ENCODE measurements at regions of chr20 and their contacts with region 1.

Region 1: DNA sequence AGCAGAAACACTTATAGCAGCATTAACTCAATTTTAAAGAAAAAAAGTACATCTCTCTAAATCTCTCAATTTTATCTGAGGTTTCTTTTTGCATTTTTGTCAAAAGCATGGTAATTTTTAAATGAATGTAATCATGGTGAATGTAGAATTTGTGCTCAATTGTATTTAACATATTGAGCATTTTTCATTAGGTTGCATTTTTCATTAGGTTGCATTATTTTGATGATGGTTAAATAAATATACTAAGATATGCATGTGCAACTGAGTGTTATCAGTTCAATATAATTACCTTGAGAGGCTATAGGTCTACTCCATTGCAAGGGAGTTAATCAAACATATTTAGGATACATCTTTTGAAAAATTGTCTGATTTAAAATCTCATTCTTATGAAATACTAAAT is 355.1 kb upstream of the SPTLC3 start:
- DNase-seq: no peak
- ATAC-seq: no peak
- H3K4me3 ChIP-seq: no peak overlapping the region
- H3K27ac ChIP-seq: no peak overlapping the region
- H3K4me1 ChIP-seq: no peaks in the 10 kb centered on the region
- H3K27me3 ChIP-seq: peaks cover 0 to 4% (median 0%) of the 10 kb centered on the region in 7 donors
- CTCF ChIP-seq: no peak

Region 2: GRCh38 chr20:11686820-11687543 is 966.7 kb before region 1 on chr20:
- intact Hi-C with region 1: loop called in 1 of 10 experiments (anchors 5 kb)
- DNase-seq: peak in 1 of 2 donors; percentile 41
- ATAC-seq: peak in 5 of 8 donors; percentile 39 to 75 (median 44)
- H3K4me3 ChIP-seq: peak overlapping the region in 9 of 10 donors; percentile 21 to 54 (median 43)
- H3K27ac ChIP-seq: no peak overlapping the region
- H3K4me1 ChIP-seq: peaks cover 0 to 20% (median 5%) of the 10 kb centered on the region in 9 donors
- H3K27me3 ChIP-seq: peaks cover 0 to 18% (median 8%) of the 10 kb centered on the region in 7 donors
- CTCF ChIP-seq: no peak

Region 3: DNA sequence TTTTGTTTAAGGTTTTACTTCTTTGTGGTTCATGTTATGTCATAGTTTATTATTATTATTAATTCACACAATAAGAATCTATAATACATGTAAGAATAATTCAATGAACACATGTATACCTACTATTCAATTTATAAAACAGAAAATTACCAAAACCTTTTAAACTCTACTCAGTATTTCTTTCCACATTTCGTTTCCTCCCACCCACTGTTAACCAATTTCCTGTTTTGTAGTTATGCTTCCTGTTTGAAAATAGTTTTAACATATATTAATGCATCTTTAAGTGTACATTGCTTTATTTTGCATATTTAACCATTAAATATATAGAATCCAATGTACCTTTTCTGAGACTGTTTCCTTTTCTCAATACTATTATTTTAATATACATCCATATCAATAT is 42.8 kb before region 1 on chr20:
- intact Hi-C with region 1: loop called in 1 of 10 experiments (anchors 1 kb)
- DNase-seq: no peak
- ATAC-seq: no peak
- H3K4me3 ChIP-seq: no peak overlapping the region
- H3K27ac ChIP-seq: no peak overlapping the region
- H3K4me1 ChIP-seq: no peaks in the 10 kb centered on the region
- H3K27me3 ChIP-seq: no peaks in the 10 kb centered on the region
- CTCF ChIP-seq: no peak

Region 4: GRCh38 chr20:12824328-12825225 is 170.9 kb after region 1 on chr20:
- intact Hi-C with region 1: no loop called
- DNase-seq: no peak
- ATAC-seq: peak in 2 of 8 donors; percentile 47 to 57
- H3K4me3 ChIP-seq: no peak overlapping the region
- H3K27ac ChIP-seq: peak overlapping the region in 2 of 10 donors; percentile 14 to 57
- H3K4me1 ChIP-seq: peaks cover 0 to 17% (median 8%) of the 10 kb centered on the region in 9 donors
- H3K27me3 ChIP-seq: no peaks in the 10 kb centered on the region
- CTCF ChIP-seq: no peak

Measured in heart right ventricle (tissue), 16 donors.